AG04450 (cell line): ENCODE measurements at regions of chr7 and their contacts with region 1.

Region 1: DNA sequence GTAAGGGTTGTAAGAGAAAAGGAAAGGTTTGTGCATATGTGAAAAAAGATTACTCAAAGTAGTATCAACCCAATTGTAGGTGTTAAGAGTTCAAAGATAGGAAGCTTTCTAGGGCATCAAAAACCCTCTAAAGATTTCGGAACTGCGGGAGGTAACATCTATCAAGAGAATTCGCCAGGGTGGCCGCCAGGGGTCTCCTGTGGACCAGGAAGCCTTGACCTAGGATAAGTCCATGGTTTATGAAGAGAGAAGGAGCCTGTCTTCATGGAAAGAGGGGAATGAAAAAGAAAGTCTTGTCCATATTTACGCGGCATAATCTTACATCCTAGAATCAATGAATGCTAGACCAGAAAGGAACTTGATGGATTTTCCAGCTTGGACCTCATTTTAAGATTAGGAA is 140.7 kb upstream of the CALCR start:
- DNase-seq: peak; percentile 1
- H3K4me3 ChIP-seq: no peak overlapping the region
- H3K27ac ChIP-seq: no peak overlapping the region
- H3K27me3 ChIP-seq: no peaks in the 10 kb centered on the region
- CTCF ChIP-seq: peak; percentile 74

Region 2: GRCh38 chr7:93736668-93737369 is 21.6 kb after region 1 on chr7:
- CTCF ChIA-PET with region 1: no interaction called
- POLR2A ChIA-PET with region 1: no interaction called
- DNase-seq: no peak
- H3K4me3 ChIP-seq: no peak overlapping the region
- H3K27ac ChIP-seq: no peak overlapping the region
- H3K27me3 ChIP-seq: no peaks in the 10 kb centered on the region
- CTCF ChIP-seq: no peak

Region 3: GRCh38 chr7:94223375-94224070 is 508.3 kb after region 1 on chr7:
- CTCF ChIA-PET with region 1: interaction called, 13 read pairs
- POLR2A ChIA-PET with region 1: no interaction called
- DNase-seq: peak; percentile 34
- H3K4me3 ChIP-seq: no peak overlapping the region
- H3K27ac ChIP-seq: no peak overlapping the region
- H3K27me3 ChIP-seq: no peaks in the 10 kb centered on the region
- CTCF ChIP-seq: peak; percentile 74